Caco-2 (cell line): ENCODE measurements at regions of chr2 and their contacts with region 1.

Region 1: GRCh38 chr2:117656546-117656945 is 157.9 kb upstream of the DDX18 start:
- DNase-seq: peak in 1 of 2 experiments; percentile 23
- H3K4me3 ChIP-seq: no peak overlapping the region
- H3K4me3 Mint-ChIP-seq: peak overlapping the region; percentile 9
- H3K27ac Mint-ChIP-seq: no peak overlapping the region
- H3K4me1 ChIP-seq: peaks cover 19% of the 10 kb centered on the region
- H3K4me1 Mint-ChIP-seq: peaks cover 16% of the 10 kb centered on the region
- H3K27me3 ChIP-seq: no peaks in the 10 kb centered on the region
- H3K27me3 Mint-ChIP-seq: no peaks in the 10 kb centered on the region
- CTCF ChIP-seq: no peak

Region 2: DNA sequence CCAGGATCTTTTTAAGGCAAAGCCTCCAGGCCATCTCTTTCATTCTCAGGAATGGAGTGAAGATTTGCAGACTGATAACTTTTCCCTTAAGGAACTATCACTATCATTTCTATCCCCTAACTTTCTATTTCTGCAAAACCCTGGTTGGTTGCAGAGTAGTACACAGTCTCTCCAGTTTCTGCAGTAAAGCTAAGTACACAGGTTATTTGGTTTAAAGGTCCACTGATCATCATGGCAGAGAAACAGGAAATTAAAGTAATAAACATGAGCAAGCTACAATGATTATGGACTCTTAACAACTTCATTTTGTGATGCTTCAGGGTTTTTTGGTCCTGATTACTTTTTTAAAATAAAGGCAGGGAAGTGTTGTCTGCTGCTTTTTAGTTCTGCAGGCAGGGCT is 732.0 kb before region 1 on chr2:
- CTCF ChIA-PET with region 1: no interaction called
- POLR2A ChIA-PET with region 1: no interaction called
- intact Hi-C with region 1: no loop called
- DNase-seq: no peak
- H3K4me3 ChIP-seq: no peak overlapping the region
- H3K4me3 Mint-ChIP-seq: no peak overlapping the region
- H3K27ac Mint-ChIP-seq: no peak overlapping the region
- H3K4me1 ChIP-seq: 0 out of 2 replicates have a peak, but pooled peaks cover 3% of the 10 kb centered on the region
- H3K4me1 Mint-ChIP-seq: no peaks in the 10 kb centered on the region
- H3K27me3 ChIP-seq: no peaks in the 10 kb centered on the region
- H3K27me3 Mint-ChIP-seq: no peaks in the 10 kb centered on the region
- CTCF ChIP-seq: no peak

Region 3: GRCh38 chr2:117614296-117614695 is 42.2 kb before region 1 on chr2:
- CTCF ChIA-PET with region 1: no interaction called
- POLR2A ChIA-PET with region 1: no interaction called
- intact Hi-C with region 1: no loop called
- DNase-seq: no peak
- H3K4me3 ChIP-seq: no peak overlapping the region
- H3K4me3 Mint-ChIP-seq: no peak overlapping the region
- H3K27ac Mint-ChIP-seq: no peak overlapping the region
- H3K4me1 ChIP-seq: no peaks in the 10 kb centered on the region
- H3K4me1 Mint-ChIP-seq: peaks cover 5% of the 10 kb centered on the region
- H3K27me3 ChIP-seq: no peaks in the 10 kb centered on the region
- H3K27me3 Mint-ChIP-seq: no peaks in the 10 kb centered on the region
- CTCF ChIP-seq: no peak

Region 4: DNA sequence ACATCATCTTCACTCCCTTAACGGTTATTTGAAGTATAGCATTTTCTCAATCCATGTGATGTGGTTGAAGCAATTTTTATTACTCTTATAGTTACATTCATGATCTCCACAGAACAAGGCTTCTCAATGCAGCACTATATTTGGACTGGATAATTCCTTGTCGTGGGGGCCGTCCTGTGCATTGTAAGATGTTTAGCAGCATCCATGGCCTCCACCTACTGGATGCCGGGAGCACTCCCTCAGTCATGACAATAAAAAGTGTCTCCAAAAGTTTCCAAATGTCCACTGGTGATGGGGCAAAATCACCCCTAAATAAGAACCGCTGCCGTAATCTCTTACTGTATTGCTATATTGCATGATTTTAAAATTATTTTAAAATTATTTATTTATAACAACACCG is 47.3 kb after region 1 on chr2:
- CTCF ChIA-PET with region 1: no interaction called
- POLR2A ChIA-PET with region 1: no interaction called
- intact Hi-C with region 1: loop called (anchors 1 kb)
- DNase-seq: no peak
- H3K4me3 ChIP-seq: no peak overlapping the region
- H3K4me3 Mint-ChIP-seq: no peak overlapping the region
- H3K27ac Mint-ChIP-seq: no peak overlapping the region
- H3K4me1 ChIP-seq: no peaks in the 10 kb centered on the region
- H3K4me1 Mint-ChIP-seq: no peaks in the 10 kb centered on the region
- H3K27me3 ChIP-seq: no peaks in the 10 kb centered on the region
- H3K27me3 Mint-ChIP-seq: no peaks in the 10 kb centered on the region
- CTCF ChIP-seq: peak in 1 of 2 experiments; percentile 3